ENCODE measurements at regions of chr17 and their contacts with region 1.

Region 1: DNA sequence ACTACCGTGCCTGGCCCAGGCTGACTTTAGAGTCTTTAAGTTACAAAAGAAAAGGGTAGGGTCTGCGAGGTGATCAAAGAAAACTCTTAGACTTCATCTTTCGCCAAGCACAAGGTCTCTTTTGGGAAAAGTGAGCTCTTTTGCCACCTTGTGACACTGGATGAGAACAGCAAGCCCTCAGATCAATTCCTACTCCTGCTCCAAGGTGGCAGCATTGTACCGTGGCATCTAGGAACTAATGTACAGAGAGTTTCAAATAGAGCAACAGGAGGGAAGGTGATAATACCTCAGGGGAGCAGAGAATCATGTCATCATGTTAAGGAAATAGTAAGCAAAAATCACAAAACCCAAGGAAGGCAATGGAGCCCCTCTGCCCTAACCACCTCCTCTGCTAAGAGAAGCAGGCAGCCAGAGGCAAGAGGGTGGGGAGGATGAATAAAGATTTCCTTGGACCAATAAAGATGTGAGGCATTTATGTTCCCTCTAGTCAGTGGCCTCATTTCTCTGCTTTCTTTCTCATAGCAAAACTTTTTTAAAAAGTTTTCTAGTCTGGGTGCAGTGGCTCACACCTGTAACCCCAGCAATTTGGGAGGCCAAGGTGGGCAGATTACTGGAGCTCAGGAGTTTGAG is 2.1 kb upstream of the C17orf78 start:
- DNase-seq: peak; percentile 90
- H3K4me3 ChIP-seq: no peak overlapping the region
- H3K27ac ChIP-seq: no peak overlapping the region
- H3K4me1 ChIP-seq: no peaks in the 10 kb centered on the region
- H3K27me3 ChIP-seq: no peaks in the 10 kb centered on the region
- CTCF ChIP-seq: peak; percentile 94 to 97
- POLR2A ChIP-seq: no peak

Region 2: GRCh38 chr17:37117373-37118142 is 256.1 kb before region 1 on chr17:
- CTCF ChIA-PET with region 1: no interaction called
- POLR2A ChIA-PET with region 1: no interaction called
- dilution Hi-C with region 1: no loop called
- intact Hi-C with region 1: no loop called
- DNase-seq: no peak
- H3K4me3 ChIP-seq: no peak overlapping the region
- H3K27ac ChIP-seq: no peak overlapping the region
- H3K4me1 ChIP-seq: no peaks in the 10 kb centered on the region
- H3K27me3 ChIP-seq: no peaks in the 10 kb centered on the region
- CTCF ChIP-seq: no peak
- POLR2A ChIP-seq: no peak

Region 3: GRCh38 chr17:37239690-37240334 is 133.8 kb before region 1 on chr17:
- CTCF ChIA-PET with region 1: interaction called, 50 read pairs
- POLR2A ChIA-PET with region 1: no interaction called
- dilution Hi-C with region 1: no loop called
- intact Hi-C with region 1: loop called (anchors 5 kb)
- DNase-seq: peak; percentile 62
- H3K4me3 ChIP-seq: no peak overlapping the region
- H3K27ac ChIP-seq: no peak overlapping the region
- H3K4me1 ChIP-seq: no peaks in the 10 kb centered on the region
- H3K27me3 ChIP-seq: no peaks in the 10 kb centered on the region
- CTCF ChIP-seq: peak; percentile 46 to 52
- POLR2A ChIP-seq: no peak

Region 4: DNA sequence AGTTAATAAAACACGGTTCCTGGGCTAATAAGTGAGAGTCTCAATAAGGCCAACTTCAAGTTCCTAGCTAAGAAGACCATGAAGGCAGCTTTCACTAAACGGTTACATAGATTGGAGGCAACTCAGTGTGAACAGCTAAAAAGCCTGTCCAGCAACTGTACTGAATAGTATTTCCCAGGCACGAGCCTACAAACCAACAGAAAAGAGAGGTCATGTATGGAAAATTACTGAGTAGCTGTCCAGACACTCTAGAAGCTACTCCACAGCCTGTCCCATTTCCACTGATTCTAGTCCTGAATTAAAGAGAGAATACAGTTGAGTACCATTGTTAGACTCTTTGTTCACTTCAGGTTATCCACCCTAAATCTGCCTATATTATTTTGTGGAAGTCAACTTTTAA is 34.3 kb before region 1 on chr17:
- CTCF ChIA-PET with region 1: interaction called, 12 read pairs
- POLR2A ChIA-PET with region 1: no interaction called
- dilution Hi-C with region 1: no loop called
- intact Hi-C with region 1: no loop called
- DNase-seq: peak; percentile 17
- H3K4me3 ChIP-seq: no peak overlapping the region
- H3K27ac ChIP-seq: no peak overlapping the region
- H3K4me1 ChIP-seq: no peaks in the 10 kb centered on the region
- H3K27me3 ChIP-seq: no peaks in the 10 kb centered on the region
- CTCF ChIP-seq: no peak
- POLR2A ChIP-seq: no peak

Region 5: GRCh38 chr17:37406635-37407461 is 33.2 kb after region 1 on chr17 and contains the starts of genes ACACA and TADA2A:
- CTCF ChIA-PET with region 1: interaction called, 22 read pairs
- POLR2A ChIA-PET with region 1: interaction called, 4 read pairs
- dilution Hi-C with region 1: no loop called
- intact Hi-C with region 1: no loop called
- DNase-seq: peak; percentile 81
- H3K4me3 ChIP-seq: peak within 1 kb of the TSS; percentile 67 to 96 (median 86)
- H3K27ac ChIP-seq: peak within 1 kb of the TSS; percentile 84
- H3K4me1 ChIP-seq: peaks cover 12% of the 10 kb centered on the region
- H3K27me3 ChIP-seq: no peaks in the 10 kb centered on the region
- CTCF ChIP-seq: no peak
- POLR2A ChIP-seq: peak; percentile 95
- total RNA-seq, gene ACACA: 116 and 124 TPM in 2 replicates
- total RNA-seq, gene TADA2A: 20.5 and 22.4 TPM in 2 replicates

Region 6: DNA sequence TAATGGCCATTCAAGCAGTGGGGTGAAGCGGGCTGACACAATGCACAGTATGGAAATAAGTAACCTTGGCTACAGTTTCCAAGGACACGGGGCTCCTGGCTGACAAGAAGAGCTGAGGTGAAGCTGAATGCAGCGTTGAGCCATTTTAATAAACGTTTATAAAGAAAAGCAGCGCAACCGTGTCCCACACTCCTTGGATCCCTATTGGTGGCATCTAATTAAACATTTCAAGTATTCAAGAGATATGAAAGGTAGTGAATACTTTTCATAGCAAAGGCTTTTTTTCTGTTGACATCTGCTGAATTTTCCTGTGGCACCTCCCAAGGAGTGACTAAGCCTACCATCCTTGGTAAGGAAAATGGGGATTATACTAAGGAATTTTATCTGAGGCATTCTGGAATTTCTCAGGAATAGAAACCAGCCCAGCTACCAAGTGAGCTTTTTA is 142.5 kb after region 1 on chr17:
- CTCF ChIA-PET with region 1: interaction called, 11 read pairs
- POLR2A ChIA-PET with region 1: no interaction called
- dilution Hi-C with region 1: no loop called
- intact Hi-C with region 1: no loop called
- DNase-seq: no peak
- H3K4me3 ChIP-seq: no peak overlapping the region
- H3K27ac ChIP-seq: no peak overlapping the region
- H3K4me1 ChIP-seq: no peaks in the 10 kb centered on the region
- H3K27me3 ChIP-seq: no peaks in the 10 kb centered on the region
- CTCF ChIP-seq: no peak
- POLR2A ChIP-seq: no peak

Region 7: DNA sequence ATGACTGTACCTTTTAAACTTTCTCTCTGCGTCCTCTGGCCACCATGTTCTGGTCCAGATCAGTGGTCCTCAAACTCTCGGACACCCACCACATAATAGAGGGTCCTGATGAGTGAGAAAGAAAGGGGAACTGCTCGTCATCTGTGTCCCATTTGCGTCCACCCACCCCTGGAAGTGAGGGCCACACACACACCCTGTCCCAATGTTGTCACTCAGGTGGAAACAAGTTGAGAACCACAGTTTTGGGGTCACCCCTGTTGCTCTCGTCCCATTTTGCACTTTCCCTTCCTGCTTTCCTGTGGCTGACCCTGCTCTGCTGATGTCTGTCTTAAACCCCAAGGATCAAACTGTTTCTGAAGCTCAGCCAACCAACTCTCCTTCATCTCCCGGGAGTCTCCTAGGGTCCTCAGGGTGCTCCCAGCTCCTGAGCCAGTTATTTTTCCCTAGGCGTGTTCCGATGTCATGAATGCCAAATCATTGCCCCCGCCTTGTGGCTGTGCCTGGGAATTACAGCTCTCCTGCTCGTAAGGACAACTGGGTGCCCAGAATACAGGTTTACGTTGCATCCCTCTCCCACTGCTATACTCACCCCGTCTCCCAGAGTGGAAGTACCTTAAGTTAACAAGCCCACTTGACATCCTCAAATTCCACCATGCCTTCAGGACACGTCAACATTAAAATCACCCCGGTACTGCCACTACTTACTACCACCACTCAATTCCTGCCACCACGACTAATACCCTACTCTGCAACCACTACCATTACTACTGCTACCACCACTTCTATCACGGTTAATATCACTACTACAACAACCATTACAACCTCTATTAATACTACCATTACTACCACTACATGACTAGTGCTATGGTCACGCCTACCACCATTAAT is 397.2 kb after region 1 on chr17:
- CTCF ChIA-PET with region 1: interaction called, 11 read pairs
- POLR2A ChIA-PET with region 1: no interaction called
- dilution Hi-C with region 1: no loop called
- intact Hi-C with region 1: no loop called
- DNase-seq: peak; percentile 61
- H3K4me3 ChIP-seq: no peak overlapping the region
- H3K27ac ChIP-seq: no peak overlapping the region
- H3K4me1 ChIP-seq: no peaks in the 10 kb centered on the region
- H3K27me3 ChIP-seq: no peaks in the 10 kb centered on the region
- CTCF ChIP-seq: peak; percentile 73 to 80
- POLR2A ChIP-seq: no peak

Measured in endothelial cell of umbilical vein (primary cell).